Mammary epithelial cell (primary cell): ENCODE measurements at regions of chr17 and their contacts with region 1.

Region 1: DNA sequence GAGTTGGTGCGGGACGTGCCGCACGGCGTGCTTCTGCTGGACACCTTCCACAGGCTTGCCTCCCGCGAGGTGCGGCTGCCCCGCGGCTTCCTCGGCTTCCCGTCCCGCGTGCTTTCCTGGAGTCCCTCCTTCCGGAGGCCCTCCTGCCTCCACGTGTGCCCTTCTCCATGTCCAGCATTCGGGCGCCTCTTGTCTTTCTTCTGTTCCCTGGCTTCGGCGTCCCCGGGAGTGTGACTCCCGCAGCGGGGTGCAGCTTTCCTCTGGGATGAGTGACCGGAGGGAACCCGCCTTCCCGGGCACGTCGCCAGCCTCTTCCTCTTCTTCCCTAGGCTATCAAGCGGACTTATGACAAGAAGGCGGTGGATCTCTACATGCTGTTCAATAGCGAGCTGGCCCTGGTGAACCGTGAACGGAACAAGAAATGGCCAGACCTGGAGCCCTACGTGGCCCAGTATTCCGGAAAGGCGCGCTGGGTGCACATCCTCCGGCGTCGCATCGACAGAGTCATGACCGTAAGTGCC is 23.0 kb downstream of the DNAH2 start:
- DNase-seq: no peak
- H3K4me3 ChIP-seq: no peak overlapping the region
- H3K27ac ChIP-seq: no peak overlapping the region
- H3K4me1 ChIP-seq: peaks cover under 1% of the 10 kb centered on the region
- H3K27me3 ChIP-seq: peaks cover 3% of the 10 kb centered on the region
- CTCF ChIP-seq: no peak

Region 2: DNA sequence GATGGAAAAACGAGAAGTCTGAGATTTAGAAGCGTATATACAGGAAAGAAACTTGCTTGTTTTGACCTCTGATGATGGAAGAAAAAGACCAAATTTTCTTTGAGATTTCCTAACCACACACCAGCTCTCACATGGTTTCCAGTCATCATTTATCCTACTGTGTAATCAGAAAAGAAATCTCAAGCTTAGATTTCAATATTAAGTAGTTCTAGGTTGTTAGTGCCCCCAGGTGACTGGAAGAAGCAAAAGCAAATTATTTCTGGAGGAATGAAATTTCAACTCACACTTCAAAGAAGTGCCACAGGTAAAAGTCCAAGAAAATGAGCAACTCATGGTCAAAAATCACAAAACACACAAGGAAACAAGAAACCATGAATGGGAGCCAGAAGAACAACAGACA is 41.7 kb after region 1 on chr17:
- CTCF ChIA-PET with region 1: interaction called, 29 read pairs
- dilution Hi-C with region 1: no loop called
- in situ Hi-C with region 1: no loop called
- intact Hi-C with region 1: loop called (anchors 1 kb)
- DNase-seq: peak; percentile 32
- H3K4me3 ChIP-seq: no peak overlapping the region
- H3K27ac ChIP-seq: no peak overlapping the region
- H3K4me1 ChIP-seq: peaks cover 3% of the 10 kb centered on the region
- H3K27me3 ChIP-seq: no peaks in the 10 kb centered on the region
- CTCF ChIP-seq: peak; percentile 13 to 35

Region 3: GRCh38 chr17:7851438-7852256 is 111.1 kb after region 1 on chr17:
- CTCF ChIA-PET with region 1: interaction called, 3 read pairs
- dilution Hi-C with region 1: no loop called
- in situ Hi-C with region 1: loop called in 1 of 2 experiments (anchors 10 kb)
- intact Hi-C with region 1: loop called (anchors 1 kb)
- DNase-seq: peak; percentile 84
- H3K4me3 ChIP-seq: peak overlapping the region in 2 of 3 experiments; percentile 10 to 31
- H3K27ac ChIP-seq: no peak overlapping the region
- H3K4me1 ChIP-seq: peaks cover 46% of the 10 kb centered on the region
- H3K27me3 ChIP-seq: no peaks in the 10 kb centered on the region
- CTCF ChIP-seq: peak; percentile 79 to 93

Region 4: GRCh38 chr17:7897773-7898172 is 157.2 kb after region 1 on chr17:
- CTCF ChIA-PET with region 1: no interaction called
- dilution Hi-C with region 1: no loop called
- in situ Hi-C with region 1: no loop called
- intact Hi-C with region 1: loop called (anchors 1 kb)
- DNase-seq: peak; percentile 31
- H3K4me3 ChIP-seq: no peak overlapping the region
- H3K27ac ChIP-seq: no peak overlapping the region
- H3K4me1 ChIP-seq: no peaks in the 10 kb centered on the region
- H3K27me3 ChIP-seq: no peaks in the 10 kb centered on the region
- CTCF ChIP-seq: peak; percentile 27 to 51

Region 5: DNA sequence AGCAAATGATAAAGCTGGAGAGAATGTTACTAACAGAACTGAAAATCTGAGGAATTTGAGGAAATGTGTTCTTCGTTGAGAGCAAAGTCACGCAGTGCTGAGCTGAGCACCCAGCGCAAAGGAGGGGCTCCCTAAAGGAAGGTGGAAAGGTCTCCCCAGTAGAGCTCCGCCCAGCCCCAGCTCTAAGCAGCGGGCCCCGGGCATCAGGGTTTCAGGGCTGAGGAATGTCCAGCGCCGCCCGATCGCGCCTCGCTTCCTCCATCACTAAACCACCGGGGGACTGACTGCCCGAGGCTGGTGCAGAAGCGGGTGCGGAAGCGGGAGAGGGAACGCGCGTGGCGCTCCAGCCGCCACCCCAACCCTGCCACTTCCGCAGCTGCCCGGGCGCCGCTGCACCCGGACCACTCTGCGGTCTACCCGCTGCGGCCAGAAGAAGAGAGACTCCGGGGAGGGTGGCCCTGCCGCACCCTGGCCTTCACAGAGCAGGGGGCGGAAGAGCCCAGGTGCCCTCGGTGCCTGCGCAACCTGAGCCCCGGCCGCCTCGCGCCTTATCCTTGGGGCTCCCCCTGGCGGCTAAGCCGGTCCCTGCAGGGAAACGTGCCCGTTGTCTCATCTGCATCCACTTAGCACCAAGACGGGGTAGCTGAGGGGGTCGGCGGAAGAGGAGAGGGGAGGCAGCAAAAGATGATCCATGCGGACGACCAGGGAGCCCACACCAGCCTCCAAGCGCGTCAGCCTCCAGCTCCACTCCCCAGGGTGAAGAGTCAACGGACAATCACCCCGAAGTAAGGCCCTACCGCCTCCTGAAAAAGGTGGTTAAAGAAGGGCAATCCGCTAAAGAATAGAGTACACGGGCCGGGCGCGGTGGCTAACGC is 249.5 kb after region 1 on chr17:
- CTCF ChIA-PET with region 1: no interaction called
- dilution Hi-C with region 1: no loop called
- in situ Hi-C with region 1: no loop called
- intact Hi-C with region 1: loop called (anchors 2 kb)
- DNase-seq: peak; percentile 65
- H3K4me3 ChIP-seq: peak overlapping the region; percentile 55 to 76 (median 55)
- H3K27ac ChIP-seq: peak overlapping the region; percentile 26
- H3K4me1 ChIP-seq: peaks cover 21% of the 10 kb centered on the region
- H3K27me3 ChIP-seq: no peaks in the 10 kb centered on the region
- CTCF ChIP-seq: peak; percentile 85 to 96